Naive thymus-derived CD4-positive, alpha-beta T cell (primary cell): ENCODE measurements at regions of chr6 and their contacts with region 1.

Region 1: DNA sequence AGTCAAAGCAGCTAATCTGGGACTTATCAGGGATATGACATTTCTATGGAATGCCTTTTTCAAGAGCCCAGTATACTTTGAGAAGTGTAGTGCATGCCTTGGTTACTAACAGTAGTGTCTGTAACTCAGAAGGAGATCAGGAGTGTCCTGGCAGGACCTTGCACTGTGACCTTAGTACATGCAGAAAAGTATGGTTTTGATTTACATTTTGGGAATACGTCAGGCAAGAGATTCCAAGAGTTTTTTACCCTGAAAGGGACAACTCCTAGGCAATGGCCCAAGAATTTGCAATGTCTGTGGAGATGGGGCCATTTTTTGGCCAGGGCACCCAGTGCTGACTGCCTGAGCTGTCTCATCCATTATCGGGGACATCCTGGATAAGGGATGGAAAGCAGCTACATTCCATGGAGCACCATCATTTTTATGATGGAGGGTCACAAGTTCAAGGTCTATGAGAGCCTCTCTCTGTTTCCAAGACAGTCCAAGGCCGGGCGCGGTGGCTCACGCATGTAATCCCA is 80.2 kb downstream of the FAM50B start:
- DNase-seq: no peak
- ATAC-seq: no peak
- H3K4me3 ChIP-seq: no peak overlapping the region
- H3K4me3 Mint-ChIP-seq: no peak overlapping the region
- H3K27ac ChIP-seq: no peak overlapping the region
- H3K27ac Mint-ChIP-seq: no peak overlapping the region
- H3K4me1 ChIP-seq: no peaks in the 10 kb centered on the region
- H3K4me1 Mint-ChIP-seq: no peaks in the 10 kb centered on the region
- H3K27me3 ChIP-seq: no peaks in the 10 kb centered on the region
- H3K27me3 Mint-ChIP-seq: peaks cover 0 to 13% (median 5%) of the 10 kb centered on the region in 5 donors

Region 2: GRCh38 chr6:3751730-3752542 is 177.4 kb before region 1 on chr6:
- CTCF ChIA-PET with region 1: interaction called, 15 read pairs
- POLR2A ChIA-PET with region 1: no interaction called
- intact Hi-C with region 1: loop called in 1 of 2 experiments (anchors 1 kb)
- DNase-seq: peak; percentile 11 to 72 (median 38)
- ATAC-seq: peak; percentile 77
- H3K4me3 ChIP-seq: peak overlapping the region; percentile 46
- H3K4me3 Mint-ChIP-seq: peak overlapping the region in 9 of 10 donors; percentile 35 to 82 (median 53)
- H3K27ac ChIP-seq: no peak overlapping the region
- H3K27ac Mint-ChIP-seq: no peak overlapping the region
- H3K4me1 ChIP-seq: no peaks in the 10 kb centered on the region
- H3K4me1 Mint-ChIP-seq: peaks cover 0 to 6% (median 4%) of the 10 kb centered on the region in 7 donors
- H3K27me3 ChIP-seq: peaks cover 7 to 9% of the 10 kb centered on the region in 2 donors
- H3K27me3 Mint-ChIP-seq: peaks cover 36 to 72% (median 40%) of the 10 kb centered on the region in 5 donors

Region 3: GRCh38 chr6:3919130-3919628 is 10.2 kb before region 1 on chr6:
- CTCF ChIA-PET with region 1: interaction called, 3 read pairs
- POLR2A ChIA-PET with region 1: no interaction called
- intact Hi-C with region 1: loop called in 1 of 2 experiments (anchors 2 kb)
- DNase-seq: no peak
- ATAC-seq: no peak
- H3K4me3 ChIP-seq: no peak overlapping the region
- H3K4me3 Mint-ChIP-seq: no peak overlapping the region
- H3K27ac ChIP-seq: no peak overlapping the region
- H3K27ac Mint-ChIP-seq: no peak overlapping the region
- H3K4me1 ChIP-seq: peaks cover 16 to 22% of the 10 kb centered on the region in 2 donors
- H3K4me1 Mint-ChIP-seq: peaks cover 16 to 30% (median 25%) of the 10 kb centered on the region in 7 donors
- H3K27me3 ChIP-seq: no peaks in the 10 kb centered on the region
- H3K27me3 Mint-ChIP-seq: peaks cover 0 to 60% (median 2%) of the 10 kb centered on the region in 5 donors

Region 4: GRCh38 chr6:3977875-3978711 is 48.8 kb after region 1 on chr6:
- CTCF ChIA-PET with region 1: interaction called, 3 read pairs
- POLR2A ChIA-PET with region 1: no interaction called
- intact Hi-C with region 1: loop called in 1 of 2 experiments (anchors 1 kb)
- DNase-seq: peak in 8 of 9 donors; percentile 23 to 69 (median 52)
- ATAC-seq: peak; percentile 98
- H3K4me3 ChIP-seq: no peak overlapping the region
- H3K4me3 Mint-ChIP-seq: no peak overlapping the region
- H3K27ac ChIP-seq: no peak overlapping the region
- H3K27ac Mint-ChIP-seq: peak overlapping the region in 3 of 9 donors; percentile 5 to 66 (median 5)
- H3K4me1 ChIP-seq: no peaks in the 10 kb centered on the region
- H3K4me1 Mint-ChIP-seq: peaks cover 6 to 13% (median 10%) of the 10 kb centered on the region in 7 donors
- H3K27me3 ChIP-seq: no peaks in the 10 kb centered on the region
- H3K27me3 Mint-ChIP-seq: peaks cover 0 to 30% (median 0%) of the 10 kb centered on the region in 5 donors

Region 5: GRCh38 chr6:4008324-4009047 is 79.1 kb after region 1 on chr6:
- CTCF ChIA-PET with region 1: no interaction called
- POLR2A ChIA-PET with region 1: no interaction called
- intact Hi-C with region 1: loop called in 1 of 2 experiments (anchors 1 kb)
- DNase-seq: peak in 7 of 9 donors; percentile 27 to 63 (median 57)
- ATAC-seq: peak; percentile 94
- H3K4me3 ChIP-seq: no peak overlapping the region
- H3K4me3 Mint-ChIP-seq: peak overlapping the region in 1 of 10 donors; percentile 36
- H3K27ac ChIP-seq: no peak overlapping the region
- H3K27ac Mint-ChIP-seq: peak overlapping the region in 3 of 9 donors; percentile 0 to 63 (median 43)
- H3K4me1 ChIP-seq: peaks cover 15 to 27% of the 10 kb centered on the region in 2 donors
- H3K4me1 Mint-ChIP-seq: peaks cover 40 to 71% (median 60%) of the 10 kb centered on the region in 7 donors
- H3K27me3 ChIP-seq: no peaks in the 10 kb centered on the region
- H3K27me3 Mint-ChIP-seq: no peaks in the 10 kb centered on the region

Region 6: GRCh38 chr6:4155848-4156466 is 226.6 kb after region 1 on chr6:
- CTCF ChIA-PET with region 1: no interaction called
- POLR2A ChIA-PET with region 1: no interaction called
- intact Hi-C with region 1: loop called in 1 of 2 experiments (anchors 1 kb)
- DNase-seq: peak; percentile 33 to 81 (median 71)
- ATAC-seq: peak; percentile 95
- H3K4me3 ChIP-seq: no peak overlapping the region
- H3K4me3 Mint-ChIP-seq: peak overlapping the region in 2 of 10 donors; percentile 20 to 29
- H3K27ac ChIP-seq: no peak overlapping the region
- H3K27ac Mint-ChIP-seq: no peak overlapping the region
- H3K4me1 ChIP-seq: no peaks in the 10 kb centered on the region
- H3K4me1 Mint-ChIP-seq: peaks cover 0 to 24% (median 5%) of the 10 kb centered on the region in 7 donors
- H3K27me3 ChIP-seq: no peaks in the 10 kb centered on the region
- H3K27me3 Mint-ChIP-seq: peaks cover 0 to 12% (median 6%) of the 10 kb centered on the region in 5 donors